Common myeloid progenitor, CD34-positive (primary cell): ENCODE measurements at regions of chr2 and their contacts with region 1.

Region 1: GRCh38 chr2:112692496-112692911 is 28.3 kb upstream of the NT5DC4 start:
- DNase-seq: peak; percentile 72 to 94 (median 94)
- H3K4me3 ChIP-seq: no peak overlapping the region
- H3K27ac ChIP-seq: peak overlapping the region in 1 of 2 experiments; percentile 19
- H3K4me1 ChIP-seq: peaks cover 3 to 43% (median 25%) of the 10 kb centered on the region in 4 experiments
- H3K27me3 ChIP-seq: no peaks in the 10 kb centered on the region

Region 2: GRCh38 chr2:112156152-112156986 is 536.1 kb before region 1 on chr2:
- CTCF ChIA-PET with region 1: no interaction called
- POLR2A ChIA-PET with region 1: no interaction called
- DNase-seq: peak in 2 of 3 donors; percentile 42 to 55
- H3K4me3 ChIP-seq: no peak overlapping the region
- H3K27ac ChIP-seq: no peak overlapping the region
- H3K4me1 ChIP-seq: peaks cover 0 to 15% (median 13%) of the 10 kb centered on the region in 4 experiments
- H3K27me3 ChIP-seq: no peaks in the 10 kb centered on the region

Region 3: DNA sequence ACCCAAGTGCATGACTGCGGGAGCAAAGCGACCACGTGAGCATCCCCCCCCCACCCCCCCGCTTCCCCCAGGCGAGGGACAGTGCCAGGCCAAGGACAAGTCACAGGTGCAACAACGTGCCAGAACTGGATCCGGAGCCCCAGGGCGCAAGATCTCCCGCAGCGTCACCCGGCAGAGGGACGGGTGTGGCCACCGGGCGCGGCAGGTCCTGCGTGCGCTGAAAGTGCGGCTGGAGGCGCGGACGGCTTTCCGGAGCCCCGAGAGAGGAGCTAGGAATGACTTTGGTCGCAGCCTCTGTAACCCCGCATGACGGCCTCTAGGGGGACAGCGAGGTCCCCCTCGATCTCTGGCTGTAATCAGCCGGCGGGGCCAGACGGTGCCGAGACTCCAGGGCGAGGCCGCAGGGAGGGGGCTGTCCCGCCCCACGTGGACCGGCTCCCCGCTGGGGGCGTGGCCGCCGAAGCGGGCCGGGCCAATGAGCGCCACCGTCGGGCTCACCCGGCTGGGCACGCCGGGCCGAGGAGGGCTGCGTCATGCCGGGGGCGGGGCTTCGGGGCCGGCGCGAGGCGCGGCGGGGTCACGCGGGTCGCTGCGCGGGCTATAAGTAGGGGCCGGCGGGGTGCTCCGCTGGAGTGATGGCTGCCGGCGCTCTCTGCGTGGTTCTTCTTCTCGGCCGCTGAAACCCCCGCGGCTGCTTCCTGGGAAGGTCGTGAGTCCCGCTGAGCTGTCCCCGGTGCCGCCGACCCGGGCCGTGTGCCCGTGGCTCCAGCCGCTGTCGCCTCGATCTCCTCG is 47.0 kb before region 1 on chr2 and contains the start of gene SLC20A1:
- CTCF ChIA-PET with region 1: interaction called, 10 read pairs
- POLR2A ChIA-PET with region 1: no interaction called
- DNase-seq: peak; percentile 96 to 98 (median 98)
- H3K4me3 ChIP-seq: peak within 1 kb of the TSS; percentile 84 to 98 (median 90)
- H3K27ac ChIP-seq: peak within 1 kb of the TSS; percentile 57 to 89
- H3K4me1 ChIP-seq: peaks cover 13 to 79% (median 55%) of the 10 kb centered on the region in 4 experiments
- H3K27me3 ChIP-seq: no peaks in the 10 kb centered on the region

Region 4: GRCh38 chr2:112674229-112674628 is 18.3 kb before region 1 on chr2:
- CTCF ChIA-PET with region 1: interaction called, 18 read pairs
- POLR2A ChIA-PET with region 1: interaction called, 3 read pairs
- DNase-seq: peak; percentile 86 to 93 (median 91)
- H3K4me3 ChIP-seq: peak overlapping the region in 6 of 7 experiments; percentile 20 to 65 (median 28)
- H3K27ac ChIP-seq: no peak overlapping the region
- H3K4me1 ChIP-seq: peaks cover 0 to 32% (median 18%) of the 10 kb centered on the region in 4 experiments
- H3K27me3 ChIP-seq: no peaks in the 10 kb centered on the region

Region 5: GRCh38 chr2:112706170-112706664 is 13.7 kb after region 1 on chr2:
- CTCF ChIA-PET with region 1: interaction called, 55 read pairs
- POLR2A ChIA-PET with region 1: interaction called, 4 read pairs
- DNase-seq: peak; percentile 97 to 99 (median 99)
- H3K4me3 ChIP-seq: peak overlapping the region in 3 of 7 experiments; percentile 26 to 50 (median 30)
- H3K27ac ChIP-seq: peak overlapping the region in 1 of 2 experiments; percentile 49
- H3K4me1 ChIP-seq: peaks cover 28 to 89% (median 70%) of the 10 kb centered on the region in 4 experiments
- H3K27me3 ChIP-seq: no peaks in the 10 kb centered on the region